ENCODE measurements at regions of chr1 and their contacts with region 1.

Region 1: GRCh38 chr1:155379631-155380090 is 59.0 kb downstream of the RUSC1 start:
- DNase-seq: peak; percentile 10
- ATAC-seq: no peak
- H3K4me3 ChIP-seq: no peak overlapping the region
- H3K27ac ChIP-seq: no peak overlapping the region
- H3K4me1 ChIP-seq: no peaks in the 10 kb centered on the region
- H3K27me3 ChIP-seq: no peaks in the 10 kb centered on the region
- CTCF ChIP-seq: no peak

Region 2: DNA sequence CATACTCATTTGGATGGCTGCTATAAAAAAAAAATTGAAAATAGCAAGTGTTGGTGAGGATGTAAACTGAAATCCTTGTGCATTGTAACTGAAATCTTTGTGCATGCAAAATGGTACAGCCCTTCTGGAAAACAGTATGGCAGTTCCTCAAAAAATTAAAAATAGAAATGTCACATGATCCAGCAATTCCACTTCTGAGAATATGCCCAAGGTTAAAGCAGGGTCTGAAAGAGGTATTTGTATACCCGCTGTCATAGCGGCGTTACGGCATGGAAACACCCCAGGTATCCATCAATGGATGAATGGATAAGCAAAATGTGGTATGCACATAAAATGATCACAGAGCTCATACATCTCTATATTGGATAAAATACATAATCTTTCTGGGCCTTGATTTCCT is 57.7 kb after region 1 on chr1:
- CTCF ChIA-PET with region 1: no interaction called
- POLR2A ChIA-PET with region 1: no interaction called
- intact Hi-C with region 1: loop called (anchors 10 kb)
- DNase-seq: no peak
- ATAC-seq: no peak
- H3K4me3 ChIP-seq: no peak overlapping the region
- H3K27ac ChIP-seq: no peak overlapping the region
- H3K4me1 ChIP-seq: no peaks in the 10 kb centered on the region
- H3K27me3 ChIP-seq: no peaks in the 10 kb centered on the region
- CTCF ChIP-seq: no peak

Region 3: DNA sequence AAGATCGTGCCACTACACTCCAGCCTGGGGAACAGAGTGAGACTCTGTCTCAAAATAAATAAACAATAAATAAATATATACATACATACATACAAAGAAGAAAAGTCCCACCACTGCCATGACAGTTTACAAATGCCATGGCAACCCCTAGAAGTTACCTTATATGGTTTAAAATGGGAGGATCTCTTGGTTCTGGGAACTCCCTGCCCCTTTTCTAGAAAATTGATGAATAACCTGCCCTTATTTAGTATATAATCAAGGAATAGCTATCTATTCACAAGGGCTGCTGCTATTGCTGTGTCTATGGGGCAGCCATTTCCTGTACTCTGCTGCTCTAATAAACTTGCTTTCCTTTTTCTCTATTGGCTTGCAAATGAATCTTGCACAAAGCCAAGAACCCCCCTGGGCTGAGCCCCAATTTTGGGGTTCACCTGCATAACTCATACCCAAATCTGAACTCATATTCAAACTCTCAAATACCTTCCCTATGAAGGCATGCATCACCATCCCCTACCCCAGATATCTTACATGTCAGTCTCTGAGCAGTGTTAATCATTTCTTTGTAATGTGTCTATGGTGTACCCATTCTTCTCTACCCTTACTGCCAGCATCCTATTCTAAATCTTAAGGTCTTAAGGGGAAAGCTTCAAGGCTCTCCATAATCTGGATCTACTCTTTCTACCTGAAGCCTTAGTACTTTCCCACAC is 468.3 kb after region 1 on chr1:
- CTCF ChIA-PET with region 1: no interaction called
- POLR2A ChIA-PET with region 1: no interaction called
- intact Hi-C with region 1: no loop called
- DNase-seq: no peak
- ATAC-seq: no peak
- H3K4me3 ChIP-seq: no peak overlapping the region
- H3K27ac ChIP-seq: no peak overlapping the region
- H3K4me1 ChIP-seq: no peaks in the 10 kb centered on the region
- H3K27me3 ChIP-seq: no peaks in the 10 kb centered on the region
- CTCF ChIP-seq: no peak